HEK293 (cell line): ENCODE measurements at regions of chrX and their contacts with region 1.

Region 1: DNA sequence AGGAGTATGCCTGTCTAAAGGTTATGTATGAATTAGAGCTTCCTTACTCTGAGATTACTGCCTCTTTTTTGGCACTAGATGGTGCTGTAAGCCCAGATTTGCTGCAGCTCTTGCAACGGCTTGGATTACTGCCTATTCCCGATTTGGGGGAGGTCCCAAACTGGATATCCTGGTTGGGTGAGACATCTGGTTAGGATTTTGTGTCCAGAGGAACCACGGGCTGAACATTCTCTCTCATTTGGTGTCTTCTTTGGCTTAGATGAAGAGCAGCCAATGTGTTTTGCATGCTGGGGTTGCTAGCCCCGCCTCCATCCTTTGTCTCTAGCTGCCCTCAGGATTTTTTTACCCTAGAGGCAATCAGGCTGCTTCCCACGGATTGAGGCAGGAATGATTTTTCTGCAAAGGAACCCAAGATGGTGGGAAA is 31.9 kb downstream of the F8A1 start:
- H3K4me3 ChIP-seq: no peak overlapping the region; the same call in 1 of the 2 replicates
- H3K27ac ChIP-seq: no peak overlapping the region
- H3K4me1 ChIP-seq: no peaks in the 10 kb centered on the region
- CTCF ChIP-seq: peak; percentile 81

Region 2: DNA sequence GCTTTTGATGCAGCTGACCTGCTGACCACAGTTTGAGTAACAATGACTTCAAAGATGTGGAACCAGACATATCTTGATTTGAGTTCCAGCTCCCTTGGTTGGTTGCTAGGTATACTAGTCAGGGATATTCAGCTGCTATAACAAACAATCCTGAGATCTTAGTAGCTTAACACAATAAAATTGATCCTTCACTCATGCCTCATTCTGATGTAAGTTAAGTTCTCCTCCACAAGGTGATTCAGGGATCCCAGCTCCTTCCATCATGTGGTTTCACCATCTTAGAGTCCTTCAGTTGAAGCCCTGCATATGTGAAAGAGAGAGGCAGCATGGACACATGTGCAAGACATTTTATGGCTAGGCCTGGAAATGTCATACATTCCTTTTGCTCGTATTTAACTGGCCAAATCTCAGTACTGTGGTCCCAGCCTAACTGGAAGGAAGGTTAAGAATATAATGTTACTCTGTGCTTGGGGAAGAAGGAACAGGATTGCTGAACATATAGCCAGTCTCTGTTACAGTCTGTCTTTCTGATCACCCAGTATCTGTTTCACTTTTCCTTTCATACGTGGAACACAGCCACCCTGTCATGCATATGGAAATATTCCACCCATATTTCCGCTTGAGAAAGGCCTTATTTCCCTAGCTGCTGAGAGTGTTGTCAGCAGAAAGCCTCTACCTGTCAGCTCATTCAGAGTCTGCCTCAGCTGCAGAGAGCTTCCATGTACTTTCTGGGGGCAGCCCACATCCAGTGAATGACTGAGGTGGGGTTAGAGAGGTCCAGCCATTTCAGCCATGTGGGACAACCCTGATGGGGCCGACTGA is 90.7 kb before region 1 on chrX:
- CTCF ChIA-PET with region 1: no interaction called
- POLR2A ChIA-PET with region 1: no interaction called
- H3K4me3 ChIP-seq: no peak overlapping the region
- H3K27ac ChIP-seq: no peak overlapping the region
- H3K4me1 ChIP-seq: no peaks in the 10 kb centered on the region
- CTCF ChIP-seq: no peak

Region 3: GRCh38 chrX:154850957-154851611 is 67.0 kb before region 1 on chrX:
- CTCF ChIA-PET with region 1: no interaction called
- POLR2A ChIA-PET with region 1: no interaction called
- H3K4me3 ChIP-seq: no peak overlapping the region
- H3K27ac ChIP-seq: no peak overlapping the region
- H3K4me1 ChIP-seq: no peaks in the 10 kb centered on the region
- CTCF ChIP-seq: no peak

Region 4: DNA sequence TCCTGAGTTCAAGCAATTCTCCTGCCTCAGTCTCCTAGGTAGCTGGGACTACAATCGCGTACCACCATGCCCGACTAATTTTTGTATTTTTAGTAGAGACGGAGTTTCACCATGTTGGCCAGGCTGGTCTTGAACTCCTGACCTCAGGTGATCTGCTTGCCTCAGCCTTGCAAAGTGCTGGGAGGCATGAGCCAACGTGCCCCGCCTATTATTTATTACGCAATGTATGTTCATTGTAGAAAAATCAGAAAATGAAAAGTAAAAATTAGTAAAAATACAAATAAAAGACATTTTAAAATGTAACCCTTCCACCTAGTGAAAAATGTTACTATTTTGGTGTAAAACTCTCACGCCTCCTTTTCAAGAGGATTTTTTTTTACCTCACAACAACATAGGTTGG is 17.7 kb before region 1 on chrX:
- CTCF ChIA-PET with region 1: interaction called, 11 read pairs
- POLR2A ChIA-PET with region 1: no interaction called
- H3K4me3 ChIP-seq: no peak overlapping the region
- H3K27ac ChIP-seq: no peak overlapping the region
- H3K4me1 ChIP-seq: no peaks in the 10 kb centered on the region
- CTCF ChIP-seq: no peak

Region 5: GRCh38 chrX:154980330-154981096 is 62.4 kb after region 1 on chrX:
- CTCF ChIA-PET with region 1: interaction called, 12 read pairs
- POLR2A ChIA-PET with region 1: no interaction called
- H3K4me3 ChIP-seq: no peak overlapping the region; the same call in 1 of the 2 replicates
- H3K27ac ChIP-seq: no peak overlapping the region
- H3K4me1 ChIP-seq: no peaks in the 10 kb centered on the region
- CTCF ChIP-seq: peak; percentile 87

Region 6: GRCh38 chrX:155056877-155057792 is 139.1 kb after region 1 on chrX:
- CTCF ChIA-PET with region 1: interaction called, 32 read pairs
- POLR2A ChIA-PET with region 1: no interaction called
- H3K4me3 ChIP-seq: no peak overlapping the region
- H3K27ac ChIP-seq: no peak overlapping the region
- H3K4me1 ChIP-seq: no peaks in the 10 kb centered on the region
- CTCF ChIP-seq: peak; percentile 80

Region 7: GRCh38 chrX:155086202-155086840 is 168.2 kb after region 1 on chrX:
- CTCF ChIA-PET with region 1: interaction called, 16 read pairs
- POLR2A ChIA-PET with region 1: no interaction called
- H3K4me3 ChIP-seq: no peak overlapping the region
- H3K27ac ChIP-seq: no peak overlapping the region
- H3K4me1 ChIP-seq: no peaks in the 10 kb centered on the region
- CTCF ChIP-seq: peak; percentile 46

Region 8: GRCh38 chrX:155094468-155095061 is 176.5 kb after region 1 on chrX:
- CTCF ChIA-PET with region 1: interaction called, 11 read pairs
- POLR2A ChIA-PET with region 1: no interaction called
- H3K4me3 ChIP-seq: no peak overlapping the region
- H3K27ac ChIP-seq: no peak overlapping the region
- H3K4me1 ChIP-seq: no peaks in the 10 kb centered on the region
- CTCF ChIP-seq: no peak

Region 9: GRCh38 chrX:155148724-155149537 is 230.9 kb after region 1 on chrX:
- CTCF ChIA-PET with region 1: interaction called, 18 read pairs
- POLR2A ChIA-PET with region 1: no interaction called
- H3K4me3 ChIP-seq: no peak overlapping the region
- H3K27ac ChIP-seq: no peak overlapping the region
- H3K4me1 ChIP-seq: no peaks in the 10 kb centered on the region
- CTCF ChIP-seq: peak; percentile 50